Activated naive CD8-positive, alpha-beta T cell treated with anti-CD3 and anti-CD28 coated beads, Interleukin-2, amount 10 ng/mL, durations not matched to agents 7 days and 5 days (primary cell): ENCODE measurements at regions of chr2 and their contacts with region 1.

Region 1: GRCh38 chr2:26244309-26245121 is at the starts of genes HADHA and HADHB:
- DNase-seq: peak; percentile 89
- ATAC-seq: peak; percentile 80
- H3K4me3 Mint-ChIP-seq: peak within 1 kb of the TSS; percentile 96
- H3K27ac Mint-ChIP-seq: peak within 1 kb of the TSS; percentile 99
- H3K4me1 Mint-ChIP-seq: peaks cover 40% of the 10 kb centered on the region
- H3K27me3 Mint-ChIP-seq: no peaks in the 10 kb centered on the region
- total RNA-seq, gene HADHA: 104 to 113 TPM
- total RNA-seq, gene HADHB: 68.1 to 72.7 TPM

Region 2: DNA sequence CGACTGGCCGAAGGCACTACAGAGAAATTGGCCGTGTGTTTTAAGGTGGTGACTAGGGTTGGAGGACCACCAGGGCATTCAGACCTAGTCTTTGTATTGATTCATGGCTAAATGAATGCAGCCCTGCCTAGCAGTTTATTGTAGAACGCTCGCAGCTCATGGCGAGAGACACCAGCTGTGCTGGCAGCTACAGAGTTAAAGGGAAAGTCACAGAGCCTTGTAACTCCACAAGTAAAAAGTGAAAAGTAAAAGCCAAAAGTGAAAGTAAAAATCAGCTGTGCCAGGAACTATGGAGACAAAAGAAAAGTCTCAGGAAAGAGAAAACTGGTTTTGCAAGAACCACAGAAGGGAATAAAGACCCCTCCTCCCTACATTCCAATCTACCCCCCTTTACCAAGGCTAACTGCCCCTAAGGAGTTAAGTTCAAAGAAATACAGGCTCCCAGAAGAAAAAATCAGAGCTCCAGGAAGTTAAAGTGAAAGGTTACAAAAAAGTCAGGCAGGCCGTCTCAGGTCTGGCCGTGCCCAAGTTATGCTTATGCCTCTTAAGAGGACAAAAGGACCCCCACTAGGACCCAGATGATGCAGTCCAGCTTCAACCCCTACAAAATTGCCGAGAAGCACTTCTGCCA is 55.1 kb after region 1 on chr2:
- POLR2A ChIA-PET with region 1: interaction called, 13 read pairs
- DNase-seq: peak; percentile 47
- ATAC-seq: peak; percentile 55
- H3K4me3 Mint-ChIP-seq: no peak overlapping the region
- H3K27ac Mint-ChIP-seq: no peak overlapping the region
- H3K4me1 Mint-ChIP-seq: no peaks in the 10 kb centered on the region
- H3K27me3 Mint-ChIP-seq: peaks cover 2% of the 10 kb centered on the region

Region 3: GRCh38 chr2:26312486-26312885 is 68.0 kb after region 1 on chr2:
- POLR2A ChIA-PET with region 1: no interaction called
- DNase-seq: no peak
- ATAC-seq: no peak
- H3K4me3 Mint-ChIP-seq: no peak overlapping the region
- H3K27ac Mint-ChIP-seq: no peak overlapping the region
- H3K4me1 Mint-ChIP-seq: no peaks in the 10 kb centered on the region
- H3K27me3 Mint-ChIP-seq: no peaks in the 10 kb centered on the region

Region 4: GRCh38 chr2:26345545-26346453 is 101.3 kb after region 1 on chr2 and contains the start of gene SELENOI:
- POLR2A ChIA-PET with region 1: interaction called, 21 read pairs
- DNase-seq: peak; percentile 100
- ATAC-seq: peak; percentile 93
- H3K4me3 Mint-ChIP-seq: peak within 1 kb of the TSS; percentile 95
- H3K27ac Mint-ChIP-seq: peak within 1 kb of the TSS; percentile 91
- H3K4me1 Mint-ChIP-seq: peaks cover 34% of the 10 kb centered on the region
- H3K27me3 Mint-ChIP-seq: no peaks in the 10 kb centered on the region
- total RNA-seq, gene SELENOI: 26.4 TPM